Activated CD4-positive, alpha-beta T cell treated with anti-CD3 and anti-CD28 coated beads for 36 hours (primary cell): ENCODE measurements at regions of chr6 and their contacts with region 1.

Region 1: GRCh38 chr6:111154981-111155380 is 67.7 kb downstream of the SLC16A10 start:
- DNase-seq: peak; percentile 56
- ATAC-seq: peak; percentile 97
- H3K4me3 Mint-ChIP-seq: no peak overlapping the region
- H3K27ac Mint-ChIP-seq: no peak overlapping the region
- H3K4me1 Mint-ChIP-seq: peaks cover 43% of the 10 kb centered on the region
- H3K27me3 Mint-ChIP-seq: no peaks in the 10 kb centered on the region

Region 2: DNA sequence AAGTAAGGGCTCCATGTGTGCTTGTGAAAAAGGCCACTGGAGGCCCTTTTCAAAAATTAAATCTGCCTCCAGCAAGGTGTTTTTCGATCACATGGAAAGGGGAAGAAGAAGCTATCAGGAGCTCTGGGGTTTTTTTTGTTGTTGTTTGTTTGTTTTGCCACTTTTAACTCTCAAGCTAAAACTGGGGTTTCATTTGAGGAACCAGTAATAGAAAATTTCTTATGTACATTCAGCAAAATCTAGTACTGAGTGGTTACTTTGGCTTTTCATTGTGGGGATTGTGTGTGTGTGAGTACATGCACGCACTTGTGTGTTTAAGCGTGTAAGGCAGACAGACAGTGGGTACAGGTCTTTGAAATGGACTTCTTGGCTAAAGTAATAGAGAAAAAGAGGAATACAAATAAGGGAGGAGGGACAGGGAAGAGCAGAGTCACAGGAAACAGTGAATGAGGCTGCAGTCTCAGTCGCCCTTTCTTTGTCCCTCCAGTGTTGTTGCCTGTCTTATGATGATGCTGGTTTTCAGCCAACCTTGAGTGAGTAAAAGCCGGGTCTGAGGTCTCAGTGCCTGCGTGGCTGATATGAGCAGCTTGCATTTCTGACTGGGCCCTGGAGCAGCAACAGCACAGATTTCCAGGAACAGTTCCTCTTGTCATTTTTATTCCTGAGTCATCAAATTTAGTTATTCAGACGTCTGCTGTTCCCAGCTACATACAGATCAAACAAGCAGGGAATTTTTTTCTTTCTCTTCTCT is 41.5 kb before region 1 on chr6:
- CTCF ChIA-PET with region 1: no interaction called
- POLR2A ChIA-PET with region 1: no interaction called
- intact Hi-C with region 1: loop called (anchors 2 to 5 kb)
- DNase-seq: peak; percentile 77
- ATAC-seq: peak; percentile 96
- H3K4me3 Mint-ChIP-seq: peak overlapping the region; percentile 52
- H3K27ac Mint-ChIP-seq: peak overlapping the region; percentile 91
- H3K4me1 Mint-ChIP-seq: peaks cover 36% of the 10 kb centered on the region
- H3K27me3 Mint-ChIP-seq: no peaks in the 10 kb centered on the region